ENCODE measurements at regions of chr16 and their contacts with region 1.

Region 1: GRCh38 chr16:66740010-66740409 is 11.4 kb downstream of the DYNC1LI2 start:
- DNase-seq: peak; percentile 48
- ATAC-seq: peak; percentile 72
- H3K4me3 Mint-ChIP-seq: no peak overlapping the region
- H3K27ac Mint-ChIP-seq: no peak overlapping the region
- H3K4me1 Mint-ChIP-seq: peaks cover 16% of the 10 kb centered on the region
- H3K27me3 Mint-ChIP-seq: no peaks in the 10 kb centered on the region

Region 2: DNA sequence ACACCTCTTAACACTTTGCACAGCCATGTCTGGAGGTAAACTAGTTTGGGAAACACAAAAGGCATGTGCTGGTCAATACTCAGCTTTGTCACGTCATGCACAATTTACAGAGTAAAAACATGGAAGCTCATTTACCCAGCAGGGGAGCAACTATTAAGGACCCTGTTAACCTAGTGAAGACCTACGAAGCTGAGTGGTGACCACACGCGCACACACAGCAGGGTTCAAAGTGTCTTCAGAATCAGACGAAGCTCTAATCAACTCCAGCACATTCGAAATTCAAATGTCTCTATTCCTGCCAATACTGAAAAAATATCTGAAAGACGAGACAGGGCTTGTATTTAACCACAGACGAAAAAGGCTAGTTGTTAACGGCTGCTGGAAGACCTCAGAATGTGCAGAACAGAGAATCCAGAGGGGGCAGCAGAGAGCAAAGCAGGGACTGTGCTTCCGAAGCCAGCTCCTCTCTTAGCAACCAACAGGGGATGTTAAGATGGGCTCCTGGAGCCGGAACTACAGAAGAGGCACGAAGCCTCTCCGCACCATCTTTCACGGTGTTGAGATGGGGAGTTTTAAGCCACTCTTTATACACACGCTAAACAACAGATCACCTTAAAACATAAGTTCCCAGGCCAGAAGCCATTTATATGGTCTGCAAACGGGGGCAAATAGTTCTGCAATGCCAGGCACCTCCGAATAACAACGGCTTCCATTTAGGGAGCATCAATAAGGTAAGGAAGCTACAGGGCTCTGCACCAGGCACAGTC is 89.1 kb before region 1 on chr16:
- CTCF ChIA-PET with region 1: interaction called, 8 read pairs
- POLR2A ChIA-PET with region 1: no interaction called
- intact Hi-C with region 1: loop called in 1 of 2 experiments (anchors 1 kb)
- DNase-seq: peak; percentile 89
- ATAC-seq: peak; percentile 100
- H3K4me3 Mint-ChIP-seq: peak overlapping the region; percentile 18
- H3K27ac Mint-ChIP-seq: peak overlapping the region; percentile 26
- H3K4me1 Mint-ChIP-seq: peaks cover 10% of the 10 kb centered on the region
- H3K27me3 Mint-ChIP-seq: no peaks in the 10 kb centered on the region

Region 3: DNA sequence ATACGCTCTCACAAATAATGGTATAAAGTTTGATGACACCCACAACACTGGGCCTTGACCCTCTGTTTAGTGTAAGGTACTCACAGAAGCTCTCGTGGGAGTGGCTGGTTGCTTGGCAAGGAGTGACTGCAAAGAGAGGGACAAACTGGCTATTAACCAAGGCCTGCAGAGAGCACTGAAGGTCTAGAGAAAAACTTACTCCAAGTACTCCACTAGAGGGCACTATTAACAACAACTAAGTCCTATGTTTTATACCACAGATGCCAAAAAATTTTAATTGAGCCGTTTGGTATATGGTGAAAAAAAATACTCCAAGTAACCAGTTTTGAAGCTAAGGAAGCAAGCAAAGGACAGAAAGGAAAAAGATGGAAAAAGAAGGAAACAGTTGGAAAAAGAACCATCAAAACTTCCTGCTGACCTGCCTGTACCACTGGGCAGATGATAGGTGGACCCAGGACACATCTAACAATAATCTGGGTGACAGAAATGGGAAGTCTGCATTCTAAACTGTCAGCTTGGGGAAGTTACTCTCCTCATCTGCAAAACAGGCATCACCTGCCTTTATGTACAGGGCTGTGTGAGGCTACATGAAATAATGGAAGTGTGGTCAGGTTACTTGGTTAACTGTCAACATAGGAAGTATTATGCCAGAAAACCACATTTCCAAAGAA is 11.8 kb before region 1 on chr16:
- CTCF ChIA-PET with region 1: interaction called, 37 read pairs
- POLR2A ChIA-PET with region 1: no interaction called
- intact Hi-C with region 1: no loop called
- DNase-seq: no peak
- ATAC-seq: peak; percentile 81
- H3K4me3 Mint-ChIP-seq: no peak overlapping the region
- H3K27ac Mint-ChIP-seq: no peak overlapping the region
- H3K4me1 Mint-ChIP-seq: no peaks in the 10 kb centered on the region
- H3K27me3 Mint-ChIP-seq: no peaks in the 10 kb centered on the region